ENCODE measurements at regions of chr16 and their contacts with region 1.

Region 1: GRCh38 chr16:48365581-48366164 is 19.5 kb downstream of the SIAH1 start:
- DNase-seq: peak; percentile 93
- ATAC-seq: peak; percentile 96
- H3K4me3 Mint-ChIP-seq: peak overlapping the region; percentile 90
- H3K27ac Mint-ChIP-seq: peak overlapping the region; percentile 99
- H3K4me1 Mint-ChIP-seq: peaks cover 56% of the 10 kb centered on the region
- H3K27me3 Mint-ChIP-seq: no peaks in the 10 kb centered on the region

Region 2: DNA sequence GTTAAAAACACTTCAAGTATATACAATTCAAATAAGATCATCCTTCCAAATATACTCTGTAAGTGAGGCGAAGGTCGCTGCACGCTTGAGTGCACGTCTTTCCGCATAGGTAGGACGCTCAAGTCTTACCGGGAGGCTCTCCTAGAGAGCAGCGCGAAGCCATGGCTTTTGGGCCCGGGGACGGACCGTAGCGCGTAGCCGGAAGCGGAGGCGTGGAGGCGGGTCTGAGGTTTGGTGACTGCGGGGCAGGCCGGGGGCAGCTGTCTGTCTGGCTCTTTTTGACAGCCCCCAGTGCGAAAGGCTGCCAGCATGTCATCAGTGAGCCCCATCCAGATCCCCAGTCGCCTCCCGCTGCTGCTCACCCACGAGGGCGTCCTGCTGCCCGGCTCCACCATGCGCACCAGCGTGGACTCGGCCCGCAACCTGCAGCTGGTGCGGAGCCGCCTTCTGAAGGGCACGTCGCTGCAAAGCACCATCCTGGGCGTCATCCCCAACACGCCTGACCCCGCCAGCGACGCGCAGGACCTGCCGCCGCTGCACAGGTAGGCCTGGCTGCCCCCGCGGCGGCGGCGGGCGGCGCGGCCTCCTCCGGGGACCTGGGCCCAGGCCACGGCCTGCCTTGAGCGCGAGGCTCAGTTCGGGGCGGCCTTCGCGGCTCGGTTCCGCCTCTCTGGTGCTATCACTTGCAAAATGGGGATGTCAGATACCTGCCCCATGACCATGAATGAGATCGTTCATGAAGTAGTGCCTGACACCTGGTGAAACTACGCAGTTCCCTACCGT is 121.4 kb before region 1 on chr16 and contains the start of gene LONP2:
- CTCF ChIA-PET with region 1: no interaction called
- POLR2A ChIA-PET with region 1: no interaction called
- intact Hi-C with region 1: loop called in 1 of 2 experiments (anchors 1 kb)
- DNase-seq: peak; percentile 95
- ATAC-seq: peak; percentile 94
- H3K4me3 Mint-ChIP-seq: peak within 1 kb of the TSS; percentile 91
- H3K27ac Mint-ChIP-seq: peak within 1 kb of the TSS; percentile 88
- H3K4me1 Mint-ChIP-seq: peaks cover 36% of the 10 kb centered on the region
- H3K27me3 Mint-ChIP-seq: no peaks in the 10 kb centered on the region
- total RNA-seq, gene LONP2: 60.3 to 63.2 TPM

Region 3: GRCh38 chr16:48385272-48386150 is 19.8 kb after region 1 on chr16 and contains the start of gene SIAH1:
- CTCF ChIA-PET with region 1: interaction called, 7 read pairs
- POLR2A ChIA-PET with region 1: interaction called, 8 read pairs
- intact Hi-C with region 1: loop called (anchors 1 kb)
- DNase-seq: peak; percentile 91
- ATAC-seq: peak; percentile 82
- H3K4me3 Mint-ChIP-seq: peak within 1 kb of the TSS; percentile 85
- H3K27ac Mint-ChIP-seq: peak within 1 kb of the TSS; percentile 90
- H3K4me1 Mint-ChIP-seq: peaks cover 21% of the 10 kb centered on the region
- H3K27me3 Mint-ChIP-seq: no peaks in the 10 kb centered on the region
- total RNA-seq, gene SIAH1: 13.1 to 13.3 TPM

Region 4: DNA sequence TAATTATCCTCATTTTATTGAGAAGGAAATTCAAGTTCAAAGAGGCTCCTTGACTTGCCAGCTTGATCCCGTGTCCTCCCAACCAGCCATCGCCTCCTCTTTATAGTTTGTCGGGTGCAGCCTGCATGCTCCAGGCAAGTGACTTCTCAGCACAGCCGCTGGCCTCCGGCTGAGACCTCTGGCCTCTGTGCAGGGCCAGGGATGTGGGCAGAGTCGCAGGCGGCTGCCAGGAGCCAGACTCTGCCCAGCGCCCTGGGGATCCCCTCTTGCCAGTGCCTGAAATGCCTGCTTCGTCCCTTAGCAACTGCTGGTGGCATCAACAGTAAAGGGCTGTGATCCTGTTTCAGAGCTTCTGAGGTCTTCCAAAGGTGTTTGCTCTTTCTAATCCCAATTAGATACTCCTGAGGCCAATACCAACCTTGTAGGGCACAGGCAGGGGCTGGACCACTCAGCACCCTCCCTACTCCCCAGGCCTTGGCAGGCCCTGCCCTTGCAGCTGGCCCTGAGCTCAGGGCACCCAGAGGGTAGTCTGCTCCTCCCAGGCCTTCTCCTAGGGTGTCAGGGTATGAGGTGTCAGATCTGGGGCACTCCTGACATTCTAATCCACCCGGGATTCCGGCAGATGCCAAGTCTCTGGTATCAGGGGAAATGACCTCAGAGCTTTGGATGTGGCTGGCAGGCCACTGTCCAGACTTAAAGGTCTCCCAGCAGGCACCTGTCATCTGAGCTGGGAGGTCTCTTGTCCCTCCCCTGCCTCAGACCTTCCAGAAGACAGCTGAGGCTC is 87.5 kb after region 1 on chr16:
- CTCF ChIA-PET with region 1: interaction called, 3 read pairs
- POLR2A ChIA-PET with region 1: no interaction called
- intact Hi-C with region 1: loop called (anchors 1 to 5 kb)
- DNase-seq: no peak
- ATAC-seq: no peak
- H3K4me3 Mint-ChIP-seq: no peak overlapping the region
- H3K27ac Mint-ChIP-seq: no peak overlapping the region
- H3K4me1 Mint-ChIP-seq: peaks cover 2% of the 10 kb centered on the region
- H3K27me3 Mint-ChIP-seq: peaks cover 16% of the 10 kb centered on the region

Region 5: GRCh38 chr16:48459167-48459566 is 93.5 kb after region 1 on chr16:
- CTCF ChIA-PET with region 1: no interaction called
- POLR2A ChIA-PET with region 1: no interaction called
- intact Hi-C with region 1: loop called (anchors 1 to 5 kb)
- DNase-seq: no peak
- ATAC-seq: no peak
- H3K4me3 Mint-ChIP-seq: no peak overlapping the region
- H3K27ac Mint-ChIP-seq: no peak overlapping the region
- H3K4me1 Mint-ChIP-seq: peaks cover 9% of the 10 kb centered on the region
- H3K27me3 Mint-ChIP-seq: peaks cover 35% of the 10 kb centered on the region

Region 6: GRCh38 chr16:48556913-48557351 is 191.3 kb after region 1 on chr16:
- CTCF ChIA-PET with region 1: no interaction called
- POLR2A ChIA-PET with region 1: no interaction called
- intact Hi-C with region 1: loop called in 1 of 2 experiments (anchors 5 kb)
- DNase-seq: peak; percentile 52
- ATAC-seq: peak; percentile 89
- H3K4me3 Mint-ChIP-seq: no peak overlapping the region
- H3K27ac Mint-ChIP-seq: peak overlapping the region; percentile 64
- H3K4me1 Mint-ChIP-seq: peaks cover 83% of the 10 kb centered on the region
- H3K27me3 Mint-ChIP-seq: no peaks in the 10 kb centered on the region

Region 7: DNA sequence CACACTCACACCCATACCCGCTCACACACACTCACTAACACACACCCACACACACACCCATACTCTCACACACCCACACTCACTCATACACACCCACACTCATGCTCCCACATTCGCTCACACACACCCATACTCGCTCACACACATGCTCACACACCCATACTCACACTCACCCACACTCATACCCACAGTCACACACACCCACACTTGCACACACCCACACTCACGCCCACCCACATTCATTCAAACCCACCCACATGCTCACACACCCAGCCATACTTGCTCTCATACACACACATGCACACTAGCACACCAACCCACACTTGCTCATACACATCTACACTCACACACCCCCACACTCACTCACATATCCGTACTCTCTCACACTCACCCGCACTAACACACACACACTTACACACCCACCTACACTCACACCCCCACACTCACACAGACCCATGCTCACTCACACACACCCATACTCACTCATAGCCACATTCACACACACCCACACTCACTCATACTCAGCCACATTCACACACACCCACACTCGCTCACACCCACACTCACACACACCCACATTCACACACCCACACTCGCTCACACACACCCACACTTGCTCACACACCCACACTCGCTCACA is 566.7 kb after region 1 on chr16:
- CTCF ChIA-PET with region 1: no interaction called
- POLR2A ChIA-PET with region 1: no interaction called
- intact Hi-C with region 1: no loop called
- DNase-seq: no peak
- ATAC-seq: no peak
- H3K4me3 Mint-ChIP-seq: no peak overlapping the region
- H3K27ac Mint-ChIP-seq: no peak overlapping the region
- H3K4me1 Mint-ChIP-seq: no peaks in the 10 kb centered on the region
- H3K27me3 Mint-ChIP-seq: no peaks in the 10 kb centered on the region

Measured in activated CD4-positive, alpha-beta T cell treated with anti-CD3 and anti-CD28 coated beads for 36 hours (primary cell).